Right cardiac atrium (tissue), 5 donors: ENCODE measurements at regions of chr18 and their contacts with region 1.

Region 1: DNA sequence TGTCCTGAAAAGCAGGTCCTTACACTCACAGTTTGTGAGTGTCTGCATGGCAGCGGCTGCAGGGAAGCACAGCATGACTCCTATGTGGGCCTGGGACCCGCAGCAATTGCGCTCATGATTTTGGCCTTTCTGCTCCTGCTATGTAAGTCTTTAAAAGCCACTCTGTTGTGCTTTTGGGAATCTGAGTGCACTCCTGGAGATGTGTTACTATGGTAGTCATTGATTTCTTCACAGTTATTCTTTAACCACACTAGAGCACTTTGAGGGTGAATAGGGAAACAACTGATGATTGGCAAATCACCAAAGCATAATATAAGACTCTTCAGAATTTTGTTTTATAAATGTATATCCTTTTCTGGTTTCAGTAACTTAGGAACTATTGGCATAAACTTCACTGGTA is 40.9 kb downstream of the DSG2 start:
- DNase-seq: no peak
- ATAC-seq: no peak
- H3K4me3 ChIP-seq: no peak overlapping the region
- H3K27ac ChIP-seq: no peak overlapping the region
- H3K4me1 ChIP-seq: no peaks in the 10 kb centered on the region
- H3K27me3 ChIP-seq: no peaks in the 10 kb centered on the region

Region 2: DNA sequence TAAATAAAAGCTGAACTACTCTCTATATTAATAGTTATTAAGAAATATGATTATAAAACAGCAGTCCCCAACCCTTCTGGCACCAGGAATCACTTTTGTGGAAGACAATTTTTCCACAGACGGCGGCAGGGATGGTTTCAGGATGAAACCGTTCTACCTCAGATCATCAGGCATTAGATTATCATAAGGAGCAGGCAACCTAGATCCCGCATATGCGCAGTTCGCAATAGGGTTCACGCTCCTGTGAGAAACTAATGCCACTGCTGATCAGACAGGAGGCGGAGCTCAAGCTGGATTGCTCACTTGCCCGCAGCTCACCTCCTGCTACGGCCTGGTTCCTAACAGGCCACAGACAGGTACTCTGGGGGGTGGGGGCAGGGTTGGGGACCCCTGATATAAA is 60.1 kb before region 1 on chr18:
- intact Hi-C with region 1: loop called in 1 of 4 experiments (anchors 10 kb)
- DNase-seq: no peak
- ATAC-seq: no peak
- H3K4me3 ChIP-seq: no peak overlapping the region
- H3K27ac ChIP-seq: no peak overlapping the region
- H3K4me1 ChIP-seq: no peaks in the 10 kb centered on the region
- H3K27me3 ChIP-seq: no peaks in the 10 kb centered on the region

Region 3: GRCh38 chr18:31648966-31649429 is 110.2 kb after region 1 on chr18:
- intact Hi-C with region 1: no loop called
- DNase-seq: no peak
- ATAC-seq: no peak
- H3K4me3 ChIP-seq: no peak overlapping the region
- H3K27ac ChIP-seq: no peak overlapping the region
- H3K4me1 ChIP-seq: no peaks in the 10 kb centered on the region
- H3K27me3 ChIP-seq: no peaks in the 10 kb centered on the region

Region 4: DNA sequence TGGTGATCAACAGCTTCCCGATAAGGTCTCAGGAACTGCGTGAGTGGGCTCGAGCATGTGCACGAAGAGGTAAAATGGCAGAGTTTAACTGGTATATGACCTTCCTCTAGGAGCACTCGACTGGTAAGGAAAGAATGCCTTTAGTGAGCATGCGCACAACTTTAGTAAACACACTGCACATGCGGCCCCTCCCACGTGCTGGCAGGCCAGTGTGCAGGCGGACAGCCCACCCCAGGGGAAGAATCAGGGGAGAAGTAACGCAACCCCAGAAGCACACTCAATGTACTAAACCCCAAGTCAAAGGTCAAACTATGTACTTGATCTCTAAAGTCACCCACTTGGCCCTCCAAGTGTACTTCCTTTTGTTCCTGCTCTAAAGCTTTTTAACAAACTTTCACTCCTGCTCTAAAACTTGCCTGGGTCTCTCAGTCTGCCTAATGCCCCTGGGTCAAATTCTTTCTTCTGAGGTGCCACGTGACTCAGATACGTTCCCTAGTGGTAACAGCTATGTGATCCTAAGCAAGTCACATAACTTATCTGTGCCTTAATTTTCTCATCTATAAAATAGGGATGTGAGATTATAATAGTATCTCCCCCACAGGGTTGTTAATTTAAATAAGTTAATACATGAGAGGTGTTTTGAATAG is 250.7 kb after region 1 on chr18:
- intact Hi-C with region 1: no loop called
- DNase-seq: no peak
- ATAC-seq: no peak
- H3K4me3 ChIP-seq: no peak overlapping the region
- H3K27ac ChIP-seq: no peak overlapping the region
- H3K4me1 ChIP-seq: no peaks in the 10 kb centered on the region
- H3K27me3 ChIP-seq: no peaks in the 10 kb centered on the region